Activated CD4-positive, alpha-beta memory T cell treated with anti-CD3 and anti-CD28 coated beads, Interleukin-2, amount 10 ng/mL, durations not matched to agents 7 days and 5 days (primary cell): ENCODE measurements at regions of chr16 and their contacts with region 1.

Region 1: GRCh38 chr16:68085259-68086071 is at the start of gene NFATC3:
- DNase-seq: peak; percentile 99
- H3K4me3 Mint-ChIP-seq: peak within 1 kb of the TSS; percentile 88
- H3K27ac Mint-ChIP-seq: peak within 1 kb of the TSS; percentile 95
- H3K4me1 Mint-ChIP-seq: peaks cover 61% of the 10 kb centered on the region
- H3K27me3 Mint-ChIP-seq: no peaks in the 10 kb centered on the region
- total RNA-seq, gene NFATC3: 208 to 209 TPM

Region 2: GRCh38 chr16:67561824-67562525 is 523.5 kb before region 1 on chr16:
- CTCF ChIA-PET with region 1: interaction called, 4 read pairs
- POLR2A ChIA-PET with region 1: interaction called, 13 read pairs
- DNase-seq: peak; percentile 99
- H3K4me3 Mint-ChIP-seq: peak overlapping the region; percentile 86
- H3K27ac Mint-ChIP-seq: peak overlapping the region; percentile 92
- H3K4me1 Mint-ChIP-seq: peaks cover 43% of the 10 kb centered on the region
- H3K27me3 Mint-ChIP-seq: no peaks in the 10 kb centered on the region

Region 3: GRCh38 chr16:67959520-67959919 is 125.9 kb before region 1 on chr16:
- CTCF ChIA-PET with region 1: no interaction called
- POLR2A ChIA-PET with region 1: no interaction called
- DNase-seq: no peak
- H3K4me3 Mint-ChIP-seq: no peak overlapping the region
- H3K27ac Mint-ChIP-seq: peak overlapping the region; percentile 26
- H3K4me1 Mint-ChIP-seq: peaks cover 1% of the 10 kb centered on the region
- H3K27me3 Mint-ChIP-seq: no peaks in the 10 kb centered on the region

Region 4: DNA sequence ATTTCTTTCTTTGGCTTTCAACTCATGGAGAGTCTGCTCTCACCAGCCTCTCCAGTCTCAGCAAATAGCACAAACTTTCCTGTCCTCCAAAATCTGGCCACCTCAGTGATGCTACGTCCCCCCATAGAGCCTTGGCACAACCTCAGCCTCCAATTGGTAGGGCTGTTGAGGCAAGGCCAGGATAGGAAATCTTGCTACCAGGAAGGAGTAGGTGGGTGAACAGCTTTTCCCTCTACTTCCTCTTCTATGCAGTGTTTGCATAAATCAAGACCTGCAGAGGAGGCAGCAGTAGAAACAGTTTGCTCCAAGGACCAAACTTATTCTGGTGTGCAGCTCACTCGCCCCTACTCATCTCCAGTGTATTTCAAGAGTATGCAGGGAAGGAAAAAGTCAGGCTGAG is 85.5 kb before region 1 on chr16:
- CTCF ChIA-PET with region 1: interaction called, 4 read pairs
- POLR2A ChIA-PET with region 1: interaction called, 15 read pairs
- DNase-seq: no peak
- H3K4me3 Mint-ChIP-seq: peak overlapping the region; percentile 69
- H3K27ac Mint-ChIP-seq: peak overlapping the region; percentile 89
- H3K4me1 Mint-ChIP-seq: peaks cover 49% of the 10 kb centered on the region
- H3K27me3 Mint-ChIP-seq: no peaks in the 10 kb centered on the region

Region 5: GRCh38 chr16:68064791-68065365 is 20.6 kb before region 1 on chr16:
- CTCF ChIA-PET with region 1: interaction called, 61 read pairs
- POLR2A ChIA-PET with region 1: interaction called, 514 read pairs
- DNase-seq: peak; percentile 83
- H3K4me3 Mint-ChIP-seq: no peak overlapping the region
- H3K27ac Mint-ChIP-seq: peak overlapping the region; percentile 84
- H3K4me1 Mint-ChIP-seq: peaks cover 88% of the 10 kb centered on the region
- H3K27me3 Mint-ChIP-seq: no peaks in the 10 kb centered on the region

Region 6: GRCh38 chr16:68074850-68075555 is 10.5 kb before region 1 on chr16:
- CTCF ChIA-PET with region 1: interaction called, 65 read pairs
- POLR2A ChIA-PET with region 1: interaction called, 514 read pairs
- DNase-seq: peak; percentile 94
- H3K4me3 Mint-ChIP-seq: peak overlapping the region; percentile 58
- H3K27ac Mint-ChIP-seq: peak overlapping the region; percentile 95
- H3K4me1 Mint-ChIP-seq: peaks cover 89% of the 10 kb centered on the region
- H3K27me3 Mint-ChIP-seq: no peaks in the 10 kb centered on the region

Region 7: GRCh38 chr16:68116256-68116867 is 30.9 kb after region 1 on chr16:
- CTCF ChIA-PET with region 1: interaction called, 4 read pairs
- POLR2A ChIA-PET with region 1: interaction called, 16 read pairs
- DNase-seq: no peak
- H3K4me3 Mint-ChIP-seq: no peak overlapping the region
- H3K27ac Mint-ChIP-seq: no peak overlapping the region
- H3K4me1 Mint-ChIP-seq: peaks cover 72% of the 10 kb centered on the region
- H3K27me3 Mint-ChIP-seq: no peaks in the 10 kb centered on the region